CD4-positive, alpha-beta memory T cell (primary cell): ENCODE measurements at regions of chr13 and their contacts with region 1.

Region 1: DNA sequence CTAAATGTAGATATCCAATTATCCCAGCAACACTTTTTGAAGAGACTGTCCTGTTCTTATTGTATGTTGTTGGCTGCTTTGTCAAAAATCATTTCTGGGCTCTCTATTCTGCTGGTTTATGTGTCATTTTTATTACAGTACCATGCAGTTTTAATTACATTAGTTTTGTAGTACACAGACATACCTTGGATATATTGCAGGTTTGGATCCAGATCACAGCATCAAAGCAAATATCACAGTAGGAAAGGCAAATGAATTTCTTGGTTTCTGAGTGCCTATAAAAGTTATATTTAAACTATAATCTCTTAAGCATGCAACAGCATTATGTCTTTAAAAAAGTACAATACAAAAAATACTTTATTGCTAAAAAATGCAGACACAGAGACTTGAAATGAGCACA is 564.2 kb upstream of the MIR17HG start:
- DNase-seq: no peak
- H3K4me3 ChIP-seq: no peak overlapping the region
- H3K4me3 Mint-ChIP-seq: no peak overlapping the region
- H3K27ac ChIP-seq: no peak overlapping the region
- H3K27ac Mint-ChIP-seq: no peak overlapping the region
- H3K4me1 ChIP-seq: no peaks in the 10 kb centered on the region
- H3K4me1 Mint-ChIP-seq: no peaks in the 10 kb centered on the region
- H3K27me3 ChIP-seq: no peaks in the 10 kb centered on the region
- H3K27me3 Mint-ChIP-seq: no peaks in the 10 kb centered on the region

Region 2: DNA sequence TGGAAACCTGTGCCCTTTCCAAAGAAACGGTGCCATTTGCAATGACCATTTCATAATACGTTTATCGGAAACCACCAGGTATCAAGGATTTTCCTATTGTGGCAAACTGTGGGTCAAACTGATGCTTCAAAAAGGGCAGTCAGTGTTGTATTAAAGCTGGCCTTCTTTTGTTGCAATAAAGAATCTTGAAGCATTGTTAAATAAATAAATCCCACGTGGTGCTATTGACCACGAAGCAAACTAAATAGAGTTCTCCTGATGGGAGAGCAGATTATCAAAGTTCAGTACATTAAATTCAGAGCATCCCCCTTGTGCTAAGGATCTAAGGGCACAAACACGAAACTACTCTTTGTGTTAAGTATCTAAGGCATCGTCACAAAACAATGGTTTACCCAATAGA is 18.3 kb after region 1 on chr13:
- CTCF ChIA-PET with region 1: no interaction called
- POLR2A ChIA-PET with region 1: no interaction called
- intact Hi-C with region 1: loop called (anchors 2 kb)
- DNase-seq: no peak
- H3K4me3 ChIP-seq: no peak overlapping the region
- H3K4me3 Mint-ChIP-seq: no peak overlapping the region
- H3K27ac ChIP-seq: no peak overlapping the region
- H3K27ac Mint-ChIP-seq: no peak overlapping the region
- H3K4me1 ChIP-seq: no peaks in the 10 kb centered on the region
- H3K4me1 Mint-ChIP-seq: no peaks in the 10 kb centered on the region
- H3K27me3 ChIP-seq: no peaks in the 10 kb centered on the region
- H3K27me3 Mint-ChIP-seq: no peaks in the 10 kb centered on the region

Region 3: DNA sequence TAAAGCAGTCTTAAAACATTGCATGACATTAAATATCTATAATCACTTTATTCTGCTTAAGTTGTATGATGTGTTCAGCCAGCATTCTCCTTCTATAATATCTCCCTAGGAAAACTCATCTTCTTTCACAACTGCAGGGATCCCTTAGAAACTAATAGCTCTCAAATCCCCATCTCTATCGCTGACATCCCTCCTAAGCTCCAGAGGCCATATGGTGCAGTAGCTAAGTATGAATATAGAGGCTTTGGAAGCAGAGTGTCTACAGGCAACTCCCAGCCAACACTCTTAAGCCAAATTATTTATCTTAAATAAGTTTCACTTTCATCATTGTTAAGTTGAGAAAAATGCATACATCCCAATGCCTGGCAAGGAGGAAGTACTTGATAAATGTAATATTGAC is 214.7 kb after region 1 on chr13:
- CTCF ChIA-PET with region 1: no interaction called
- POLR2A ChIA-PET with region 1: no interaction called
- intact Hi-C with region 1: no loop called
- DNase-seq: no peak
- H3K4me3 ChIP-seq: no peak overlapping the region
- H3K4me3 Mint-ChIP-seq: no peak overlapping the region
- H3K27ac ChIP-seq: no peak overlapping the region
- H3K27ac Mint-ChIP-seq: no peak overlapping the region
- H3K4me1 ChIP-seq: no peaks in the 10 kb centered on the region
- H3K4me1 Mint-ChIP-seq: no peaks in the 10 kb centered on the region
- H3K27me3 ChIP-seq: no peaks in the 10 kb centered on the region
- H3K27me3 Mint-ChIP-seq: no peaks in the 10 kb centered on the region